Activated CD4-positive, alpha-beta T cell treated with anti-CD3 and anti-CD28 coated beads, Interleukin-2, amount 10 ng/mL, durations not matched to agents 7 days and 5 days (primary cell): ENCODE measurements at regions of chr11 and their contacts with region 1.

Region 1: GRCh38 chr11:8099291-8099899 is 18.4 kb downstream of the TUB start:
- DNase-seq: peak; percentile 72
- H3K4me3 Mint-ChIP-seq: no peak overlapping the region
- H3K27ac Mint-ChIP-seq: no peak overlapping the region
- H3K4me1 Mint-ChIP-seq: no peaks in the 10 kb centered on the region
- H3K27me3 Mint-ChIP-seq: no peaks in the 10 kb centered on the region

Region 2: GRCh38 chr11:8006349-8006977 is 92.9 kb before region 1 on chr11:
- CTCF ChIA-PET with region 1: interaction called, 10 read pairs
- POLR2A ChIA-PET with region 1: no interaction called
- DNase-seq: peak; percentile 52
- H3K4me3 Mint-ChIP-seq: no peak overlapping the region
- H3K27ac Mint-ChIP-seq: no peak overlapping the region
- H3K4me1 Mint-ChIP-seq: no peaks in the 10 kb centered on the region
- H3K27me3 Mint-ChIP-seq: no peaks in the 10 kb centered on the region

Region 3: GRCh38 chr11:8033305-8034105 is 65.9 kb before region 1 on chr11:
- CTCF ChIA-PET with region 1: interaction called, 29 read pairs
- POLR2A ChIA-PET with region 1: no interaction called
- DNase-seq: peak; percentile 49
- H3K4me3 Mint-ChIP-seq: no peak overlapping the region
- H3K27ac Mint-ChIP-seq: no peak overlapping the region
- H3K4me1 Mint-ChIP-seq: peaks cover 2% of the 10 kb centered on the region
- H3K27me3 Mint-ChIP-seq: peaks cover under 1% of the 10 kb centered on the region

Region 4: GRCh38 chr11:8047382-8047781 is 52.0 kb before region 1 on chr11:
- CTCF ChIA-PET with region 1: no interaction called
- POLR2A ChIA-PET with region 1: no interaction called
- DNase-seq: no peak
- H3K4me3 Mint-ChIP-seq: no peak overlapping the region
- H3K27ac Mint-ChIP-seq: no peak overlapping the region
- H3K4me1 Mint-ChIP-seq: no peaks in the 10 kb centered on the region
- H3K27me3 Mint-ChIP-seq: peaks cover 40% of the 10 kb centered on the region

Region 5: DNA sequence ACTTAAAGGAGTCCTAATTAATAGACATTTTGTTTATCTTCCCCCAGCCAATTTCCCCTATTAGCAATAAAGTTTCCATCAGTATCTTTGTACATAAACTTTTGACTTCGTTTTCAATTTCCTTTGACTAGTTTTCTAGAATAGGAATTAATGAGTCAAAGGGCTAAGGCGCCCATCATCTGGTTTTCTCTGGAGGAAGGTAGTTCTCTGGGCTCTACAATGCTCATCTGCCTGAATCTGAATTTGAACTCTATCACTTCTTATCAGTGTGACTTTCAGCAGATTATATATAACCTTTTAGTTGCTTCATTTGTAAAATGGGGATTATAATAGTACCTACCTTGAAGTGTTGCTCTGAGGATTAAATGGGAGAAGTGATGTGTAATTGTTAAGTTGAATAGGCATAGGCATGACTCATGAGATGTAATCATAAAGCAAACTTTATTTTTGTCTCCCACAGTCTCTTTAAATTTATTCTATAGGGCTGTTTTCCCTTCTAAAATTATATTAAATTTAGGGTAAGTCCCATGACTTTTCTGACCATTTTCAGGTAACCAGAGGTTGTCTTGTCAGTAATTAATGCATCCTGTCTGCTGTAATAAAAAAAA is 24.2 kb before region 1 on chr11:
- CTCF ChIA-PET with region 1: no interaction called
- POLR2A ChIA-PET with region 1: no interaction called
- DNase-seq: no peak
- H3K4me3 Mint-ChIP-seq: no peak overlapping the region
- H3K27ac Mint-ChIP-seq: no peak overlapping the region
- H3K4me1 Mint-ChIP-seq: no peaks in the 10 kb centered on the region
- H3K27me3 Mint-ChIP-seq: peaks cover 17% of the 10 kb centered on the region